Left lung (tissue), 14 donors: ENCODE measurements at regions of chr20 and their contacts with region 1.

Region 1: DNA sequence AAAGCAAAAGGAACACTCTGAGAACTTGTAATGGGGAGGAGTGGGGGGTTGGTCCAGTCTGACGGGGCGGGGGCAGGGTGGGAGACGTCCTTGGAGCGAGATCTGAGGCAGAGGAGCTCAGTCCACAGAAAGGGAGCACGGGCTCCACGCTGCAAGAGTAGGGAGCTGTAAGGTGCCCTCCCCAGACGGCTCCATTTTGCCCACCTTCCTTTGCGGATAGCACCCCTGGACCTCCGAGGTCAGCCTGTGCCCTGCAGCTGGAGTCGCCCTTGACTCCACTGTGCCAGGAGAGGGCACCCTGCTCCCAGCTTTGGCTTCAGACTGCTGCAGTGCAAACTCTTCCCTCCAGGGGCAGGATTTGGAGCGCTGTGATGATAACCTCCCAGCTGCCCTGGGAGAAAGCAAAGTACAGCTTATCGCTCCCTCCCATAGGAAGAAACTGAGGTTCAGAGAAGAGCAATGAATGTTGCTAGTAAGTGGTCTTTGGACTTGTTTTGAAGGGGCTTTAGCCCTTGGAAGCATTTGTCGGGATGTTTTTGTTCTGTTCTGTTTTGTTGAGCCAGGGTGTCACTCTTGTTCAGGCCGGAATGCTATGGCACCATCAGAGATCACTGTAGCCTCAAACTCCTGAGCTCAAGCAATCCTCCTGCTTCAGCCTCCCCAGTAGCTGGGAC is 9.5 kb upstream of the AHCY start:
- DNase-seq: peak; percentile 79 to 90 (median 88)
- ATAC-seq: peak; percentile 100
- H3K4me3 ChIP-seq: no peak overlapping the region
- H3K27ac ChIP-seq: no peak overlapping the region
- H3K4me1 ChIP-seq: peaks cover 6 to 21% of the 10 kb centered on the region in 2 donors
- H3K27me3 ChIP-seq: peaks cover 5 to 20% of the 10 kb centered on the region in 2 donors
- CTCF ChIP-seq: peak; percentile 99

Region 2: DNA sequence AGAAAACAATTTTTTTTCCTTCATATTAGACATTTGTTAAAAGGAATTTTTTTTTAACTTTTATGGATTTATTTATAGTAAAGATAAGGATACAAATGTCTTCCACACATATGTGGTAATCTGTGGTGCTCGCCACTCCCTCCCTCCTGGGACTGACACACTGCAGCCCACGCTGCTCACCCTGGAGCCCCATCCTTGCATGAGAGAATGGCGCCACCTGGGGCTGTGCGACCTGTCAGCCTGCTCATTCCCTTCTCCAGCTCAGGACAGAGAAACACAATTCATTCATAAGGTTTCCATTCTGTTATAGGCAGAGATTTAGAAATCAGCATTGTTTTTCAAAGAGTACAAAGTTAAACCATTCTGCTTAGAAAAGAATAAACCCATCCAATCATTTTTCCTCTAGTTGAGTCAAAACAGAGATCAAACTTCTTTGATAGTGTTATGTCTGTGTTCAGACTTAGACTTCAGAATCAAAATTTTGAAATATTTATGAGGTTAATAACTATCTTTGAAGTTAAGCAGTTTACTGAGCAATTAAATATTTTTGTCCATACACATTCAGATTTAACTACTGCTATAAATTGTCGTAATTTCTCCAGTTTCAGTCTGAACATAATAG is 160.7 kb after region 1 on chr20:
- intact Hi-C with region 1: loop called in 1 of 2 experiments (anchors 10 kb)
- DNase-seq: peak in 2 of 4 donors; percentile 16 to 38
- ATAC-seq: peak; percentile 58
- H3K4me3 ChIP-seq: no peak overlapping the region
- H3K27ac ChIP-seq: peak overlapping the region in 1 of 2 donors; percentile 48
- H3K4me1 ChIP-seq: peaks cover 11 to 13% of the 10 kb centered on the region in 2 donors
- H3K27me3 ChIP-seq: no peaks in the 10 kb centered on the region
- CTCF ChIP-seq: no peak

Region 3: DNA sequence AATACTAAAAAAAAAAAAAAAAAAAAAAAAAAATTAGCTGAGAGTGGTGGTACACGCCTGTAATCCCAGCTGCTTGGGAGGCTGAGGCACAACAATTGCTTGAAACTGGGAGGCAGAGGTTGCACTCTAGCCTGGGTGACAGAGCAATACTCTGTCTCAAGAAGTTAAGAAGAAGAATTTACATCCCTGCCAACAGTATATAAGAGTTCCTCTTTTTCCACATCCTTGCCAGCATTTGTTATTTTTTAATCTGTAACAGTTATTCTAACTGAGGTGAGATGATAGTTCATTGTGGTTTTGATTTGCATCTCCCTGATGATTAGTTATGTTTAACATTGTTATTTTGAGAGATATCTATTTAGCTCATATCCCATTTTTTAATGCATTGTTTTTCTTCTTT is 183.2 kb after region 1 on chr20:
- intact Hi-C with region 1: no loop called
- DNase-seq: no peak
- ATAC-seq: no peak
- H3K4me3 ChIP-seq: no peak overlapping the region
- H3K27ac ChIP-seq: no peak overlapping the region
- H3K4me1 ChIP-seq: no peaks in the 10 kb centered on the region
- H3K27me3 ChIP-seq: no peaks in the 10 kb centered on the region
- CTCF ChIP-seq: no peak

Region 4: DNA sequence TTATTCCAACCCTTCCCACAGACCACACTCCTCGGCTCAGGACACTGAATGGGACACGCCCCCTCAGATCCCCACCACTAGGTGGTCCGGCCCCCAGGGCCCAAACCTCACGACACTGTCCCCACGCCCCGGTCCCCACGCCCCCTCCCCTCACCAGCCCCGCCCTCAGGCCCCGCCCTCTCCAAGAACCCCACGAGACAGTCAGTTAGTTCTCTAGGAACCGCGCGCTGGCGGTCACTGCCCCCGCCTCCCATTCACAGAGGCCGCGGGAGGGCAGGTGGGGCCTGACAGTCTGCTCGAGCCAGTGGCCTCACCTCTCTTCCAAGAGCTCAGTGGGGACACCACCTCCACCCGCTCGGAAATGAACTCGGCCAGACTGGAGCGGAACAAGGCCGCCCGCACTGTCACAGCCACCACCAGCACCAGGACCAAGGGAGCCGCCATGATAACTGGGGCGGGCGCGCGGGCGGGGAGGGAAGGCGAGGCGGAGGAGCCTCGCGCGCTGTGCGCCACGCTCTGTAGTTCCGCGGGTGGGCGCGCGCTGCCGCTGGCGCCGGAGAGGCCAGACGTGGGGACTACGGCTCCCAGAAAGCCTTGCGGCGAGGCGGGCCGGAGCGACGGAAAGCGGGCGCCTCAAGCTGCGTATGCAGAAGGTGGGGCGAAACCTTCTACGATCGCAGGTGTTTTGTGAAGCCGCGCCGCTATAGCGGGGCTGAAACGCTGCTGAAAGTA is 364.1 kb after region 1 on chr20 and contains the start of gene PIGU:
- intact Hi-C with region 1: no loop called
- DNase-seq: peak; percentile 93 to 99 (median 96)
- ATAC-seq: peak; percentile 99
- H3K4me3 ChIP-seq: peak within 1 kb of the TSS; percentile 60 to 64
- H3K27ac ChIP-seq: peak within 1 kb of the TSS; percentile 62 to 84
- H3K4me1 ChIP-seq: peaks cover 0 to 37% of the 10 kb centered on the region in 2 donors
- H3K27me3 ChIP-seq: no peaks in the 10 kb centered on the region
- CTCF ChIP-seq: peak in 1 of 2 donors; percentile 43
- polyA plus RNA-seq, gene PIGU: 29.4 to 38.6 (median 31.7) TPM